ENCODE measurements at regions of chr1 and their contacts with region 1.

Region 1: GRCh38 chr1:210951279-210951678 is 182.7 kb downstream of the KCNH1 start:
- DNase-seq: no peak
- ATAC-seq: no peak
- H3K4me3 ChIP-seq: no peak overlapping the region
- H3K27ac ChIP-seq: no peak overlapping the region
- H3K4me1 ChIP-seq: no peaks in the 10 kb centered on the region
- H3K27me3 ChIP-seq: peaks cover 8% of the 10 kb centered on the region; the same call in 1 of the 2 replicates
- CTCF ChIP-seq: no peak

Region 2: DNA sequence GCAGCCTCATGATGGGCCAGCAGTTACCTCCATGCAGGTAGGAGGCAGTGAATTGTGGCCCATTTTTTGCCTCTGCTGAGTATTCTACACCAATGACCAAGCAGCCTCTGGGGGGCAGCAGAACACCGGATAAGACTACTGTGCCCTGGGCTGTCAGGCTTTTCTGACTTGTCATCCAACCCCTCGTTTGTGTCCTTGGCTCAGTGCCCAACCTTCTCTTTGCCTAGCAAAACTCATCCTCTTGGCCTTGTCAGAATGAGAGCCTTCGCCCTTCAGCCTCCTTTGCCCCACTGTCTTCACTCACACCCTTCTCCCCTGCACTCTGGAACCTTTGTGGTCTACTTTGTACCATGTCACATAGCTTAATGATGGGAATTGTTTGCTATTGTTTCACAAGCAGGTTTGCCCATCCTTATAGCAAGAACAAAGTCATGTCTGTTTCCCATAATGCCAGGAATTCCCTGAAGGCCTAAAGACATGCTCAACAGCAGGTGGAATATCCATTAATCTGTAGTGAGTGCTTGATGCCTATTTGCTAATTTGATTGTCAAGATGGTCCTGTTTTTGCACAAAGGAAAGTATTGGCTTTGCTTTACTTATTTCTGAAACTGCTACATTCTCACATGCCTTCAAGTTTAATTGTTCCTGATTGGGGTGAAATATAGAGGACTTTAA is 366.7 kb before region 1 on chr1:
- CTCF ChIA-PET with region 1: no interaction called
- POLR2A ChIA-PET with region 1: no interaction called
- intact Hi-C with region 1: loop called (anchors 2 kb)
- DNase-seq: peak; percentile 93
- ATAC-seq: peak; percentile 97
- H3K4me3 ChIP-seq: no peak overlapping the region
- H3K27ac ChIP-seq: no peak overlapping the region
- H3K4me1 ChIP-seq: no peaks in the 10 kb centered on the region
- H3K27me3 ChIP-seq: peaks cover 4% of the 10 kb centered on the region; the same call in 1 of the 2 replicates
- CTCF ChIP-seq: peak; percentile 92

Region 3: DNA sequence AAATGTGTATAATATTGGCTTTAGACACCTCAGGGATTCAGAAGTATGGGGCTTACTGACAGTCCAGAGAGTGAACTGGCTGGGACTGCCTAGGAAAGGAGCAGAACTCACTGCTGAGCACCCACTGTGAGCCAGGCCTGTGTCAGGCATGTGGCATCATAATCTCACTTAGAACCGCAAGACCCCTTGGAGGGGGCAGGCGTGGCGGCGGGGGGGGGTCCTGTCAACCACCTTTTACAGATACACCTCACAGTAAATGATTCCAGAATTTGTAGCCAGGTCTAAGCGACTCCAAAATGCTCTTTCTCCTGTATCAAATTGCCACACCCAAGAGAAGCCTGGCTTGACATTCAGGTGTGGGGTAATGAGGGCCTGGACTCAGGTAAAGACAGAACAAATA is 52.8 kb before region 1 on chr1:
- CTCF ChIA-PET with region 1: interaction called, 13 read pairs
- POLR2A ChIA-PET with region 1: no interaction called
- intact Hi-C with region 1: no loop called
- DNase-seq: no peak
- ATAC-seq: no peak
- H3K4me3 ChIP-seq: no peak overlapping the region
- H3K27ac ChIP-seq: no peak overlapping the region
- H3K4me1 ChIP-seq: no peaks in the 10 kb centered on the region
- H3K27me3 ChIP-seq: peaks cover 12% of the 10 kb centered on the region
- CTCF ChIP-seq: no peak

Region 4: DNA sequence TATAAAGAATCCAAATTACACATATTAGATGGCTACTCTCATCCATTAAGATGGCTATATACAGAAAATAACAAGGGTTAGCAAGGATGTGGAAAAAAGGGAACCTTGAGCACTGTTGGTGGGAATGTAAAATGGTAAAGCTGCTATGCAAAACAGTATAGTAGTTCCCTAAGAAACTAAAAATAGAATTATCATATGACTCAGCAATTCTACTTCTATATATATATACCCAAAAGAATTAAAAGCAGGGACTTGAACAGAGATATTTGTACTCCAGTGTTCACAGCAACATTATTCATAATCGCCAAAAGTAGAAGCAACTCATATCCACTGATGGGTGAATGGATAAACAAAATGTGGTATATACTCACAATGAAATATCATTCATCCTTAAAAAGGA is 56.6 kb after region 1 on chr1:
- CTCF ChIA-PET with region 1: no interaction called
- POLR2A ChIA-PET with region 1: no interaction called
- intact Hi-C with region 1: no loop called
- DNase-seq: no peak
- ATAC-seq: no peak
- H3K4me3 ChIP-seq: no peak overlapping the region
- H3K27ac ChIP-seq: no peak overlapping the region
- H3K4me1 ChIP-seq: no peaks in the 10 kb centered on the region
- H3K27me3 ChIP-seq: peaks cover 20% of the 10 kb centered on the region; the same call in 1 of the 2 replicates
- CTCF ChIP-seq: no peak

Measured in PC-3 (cell line).